Activated CD4-positive, alpha-beta T cell treated with anti-CD3 and anti-CD28 coated beads for 36 hours (primary cell): ENCODE measurements at regions of chr5 and their contacts with region 1.

Region 1: GRCh38 chr5:159412284-159413046 is 82.2 kb upstream of the IL12B start:
- DNase-seq: peak; percentile 75
- ATAC-seq: peak; percentile 82
- H3K4me3 Mint-ChIP-seq: no peak overlapping the region
- H3K27ac Mint-ChIP-seq: no peak overlapping the region
- H3K4me1 Mint-ChIP-seq: peaks cover 47% of the 10 kb centered on the region
- H3K27me3 Mint-ChIP-seq: peaks cover 6% of the 10 kb centered on the region

Region 2: GRCh38 chr5:157415838-157416237 is 1996.6 kb before region 1 on chr5:
- CTCF ChIA-PET with region 1: no interaction called
- POLR2A ChIA-PET with region 1: no interaction called
- intact Hi-C with region 1: loop called in 1 of 2 experiments (anchors 10 kb)
- DNase-seq: no peak
- ATAC-seq: no peak
- H3K4me3 Mint-ChIP-seq: no peak overlapping the region
- H3K27ac Mint-ChIP-seq: no peak overlapping the region
- H3K4me1 Mint-ChIP-seq: no peaks in the 10 kb centered on the region
- H3K27me3 Mint-ChIP-seq: peaks cover 4% of the 10 kb centered on the region

Region 3: GRCh38 chr5:158819840-158820620 is 592.4 kb before region 1 on chr5:
- CTCF ChIA-PET with region 1: no interaction called
- POLR2A ChIA-PET with region 1: no interaction called
- intact Hi-C with region 1: loop called in 1 of 2 experiments (anchors 5 kb)
- DNase-seq: peak; percentile 41
- ATAC-seq: peak; percentile 99
- H3K4me3 Mint-ChIP-seq: no peak overlapping the region
- H3K27ac Mint-ChIP-seq: peak overlapping the region; percentile 48
- H3K4me1 Mint-ChIP-seq: peaks cover 31% of the 10 kb centered on the region
- H3K27me3 Mint-ChIP-seq: peaks cover 10% of the 10 kb centered on the region

Region 4: DNA sequence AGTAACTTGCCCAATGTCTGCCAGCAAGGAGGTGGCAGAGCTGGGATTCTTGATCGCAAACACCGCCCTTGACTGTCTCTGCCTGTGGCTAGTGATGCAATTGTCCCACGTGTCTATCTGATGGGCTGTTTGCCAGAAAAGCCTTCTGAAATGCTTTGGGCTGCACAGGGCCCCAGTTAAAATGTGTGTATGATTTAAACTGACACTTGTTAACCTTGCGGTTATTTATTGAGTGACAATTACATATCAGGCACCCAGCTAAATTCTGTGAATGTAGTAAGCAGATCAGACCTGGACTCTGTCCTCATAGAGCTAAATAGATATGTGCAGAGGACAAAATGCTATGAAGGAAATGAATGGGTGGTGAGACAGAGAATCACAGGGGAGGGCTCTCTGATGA is 70.6 kb before region 1 on chr5:
- CTCF ChIA-PET with region 1: no interaction called
- POLR2A ChIA-PET with region 1: interaction called, 3 read pairs
- intact Hi-C with region 1: loop called (anchors 1 to 5 kb)
- DNase-seq: peak; percentile 53
- ATAC-seq: peak; percentile 41
- H3K4me3 Mint-ChIP-seq: no peak overlapping the region
- H3K27ac Mint-ChIP-seq: peak overlapping the region; percentile 34
- H3K4me1 Mint-ChIP-seq: peaks cover 49% of the 10 kb centered on the region
- H3K27me3 Mint-ChIP-seq: no peaks in the 10 kb centered on the region

Region 5: GRCh38 chr5:159359408-159359807 is 53.1 kb before region 1 on chr5:
- CTCF ChIA-PET with region 1: no interaction called
- POLR2A ChIA-PET with region 1: no interaction called
- intact Hi-C with region 1: no loop called
- DNase-seq: no peak
- ATAC-seq: no peak
- H3K4me3 Mint-ChIP-seq: no peak overlapping the region
- H3K27ac Mint-ChIP-seq: no peak overlapping the region
- H3K4me1 Mint-ChIP-seq: peaks cover 3% of the 10 kb centered on the region
- H3K27me3 Mint-ChIP-seq: peaks cover 2% of the 10 kb centered on the region

Region 6: GRCh38 chr5:159440235-159440634 is 27.8 kb after region 1 on chr5:
- CTCF ChIA-PET with region 1: no interaction called
- POLR2A ChIA-PET with region 1: no interaction called
- intact Hi-C with region 1: no loop called
- DNase-seq: no peak
- ATAC-seq: no peak
- H3K4me3 Mint-ChIP-seq: no peak overlapping the region
- H3K27ac Mint-ChIP-seq: no peak overlapping the region
- H3K4me1 Mint-ChIP-seq: no peaks in the 10 kb centered on the region
- H3K27me3 Mint-ChIP-seq: peaks cover 2% of the 10 kb centered on the region

Region 7: DNA sequence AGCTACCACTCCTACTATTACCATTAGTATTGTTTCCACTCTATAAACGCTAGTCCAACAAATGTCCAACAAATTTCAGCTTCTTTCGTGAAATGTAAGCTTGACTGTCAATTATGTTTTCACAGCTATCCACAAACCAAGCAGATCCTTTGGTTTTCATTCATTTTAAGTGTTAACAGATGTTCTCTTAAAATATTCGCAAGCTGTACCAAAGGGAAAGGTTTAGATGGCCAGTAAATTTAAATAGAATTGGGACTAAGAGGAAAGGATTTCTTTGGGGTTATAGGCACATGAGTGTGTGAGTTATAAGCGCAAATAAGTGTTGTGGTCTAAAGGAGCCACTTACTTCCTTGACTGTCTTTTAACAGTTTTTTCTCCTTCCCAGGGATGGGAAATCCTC is 367.0 kb after region 1 on chr5:
- CTCF ChIA-PET with region 1: no interaction called
- POLR2A ChIA-PET with region 1: no interaction called
- intact Hi-C with region 1: loop called in 1 of 2 experiments (anchors 2 kb)
- DNase-seq: no peak
- ATAC-seq: no peak
- H3K4me3 Mint-ChIP-seq: no peak overlapping the region
- H3K27ac Mint-ChIP-seq: no peak overlapping the region
- H3K4me1 Mint-ChIP-seq: peaks cover 23% of the 10 kb centered on the region
- H3K27me3 Mint-ChIP-seq: peaks cover 44% of the 10 kb centered on the region